ENCODE measurements at regions of chr6 and their contacts with region 1.

Region 1: GRCh38 chr6:85449818-85450759 is at the start of gene NT5E:
- DNase-seq: peak; percentile 57
- H3K4me3 Mint-ChIP-seq: peak within 1 kb of the TSS; percentile 73
- H3K27ac Mint-ChIP-seq: peak within 1 kb of the TSS; percentile 53
- H3K4me1 Mint-ChIP-seq: peaks cover 46% of the 10 kb centered on the region
- H3K27me3 Mint-ChIP-seq: peaks cover 79% of the 10 kb centered on the region

Region 2: GRCh38 chr6:85460921-85461797 is 11.1 kb after region 1 on chr6:
- CTCF ChIA-PET with region 1: interaction called, 12 read pairs
- DNase-seq: peak; percentile 65
- H3K4me3 Mint-ChIP-seq: no peak overlapping the region
- H3K27ac Mint-ChIP-seq: peak overlapping the region; percentile 89
- H3K4me1 Mint-ChIP-seq: peaks cover 69% of the 10 kb centered on the region
- H3K27me3 Mint-ChIP-seq: peaks cover 15% of the 10 kb centered on the region

Region 3: GRCh38 chr6:85580882-85581267 is 130.8 kb after region 1 on chr6:
- CTCF ChIA-PET with region 1: no interaction called
- DNase-seq: no peak
- H3K4me3 Mint-ChIP-seq: no peak overlapping the region
- H3K27ac Mint-ChIP-seq: no peak overlapping the region
- H3K4me1 Mint-ChIP-seq: no peaks in the 10 kb centered on the region
- H3K27me3 Mint-ChIP-seq: no peaks in the 10 kb centered on the region

Region 4: GRCh38 chr6:85620308-85620707 is 170.2 kb after region 1 on chr6:
- CTCF ChIA-PET with region 1: no interaction called
- DNase-seq: no peak
- H3K4me3 Mint-ChIP-seq: no peak overlapping the region
- H3K27ac Mint-ChIP-seq: no peak overlapping the region
- H3K4me1 Mint-ChIP-seq: peaks cover 19% of the 10 kb centered on the region
- H3K27me3 Mint-ChIP-seq: no peaks in the 10 kb centered on the region

Region 5: GRCh38 chr6:85637579-85637978 is 187.5 kb after region 1 on chr6:
- CTCF ChIA-PET with region 1: no interaction called
- DNase-seq: no peak
- H3K4me3 Mint-ChIP-seq: no peak overlapping the region
- H3K27ac Mint-ChIP-seq: peak overlapping the region; percentile 12
- H3K4me1 Mint-ChIP-seq: peaks cover 54% of the 10 kb centered on the region
- H3K27me3 Mint-ChIP-seq: peaks cover 4% of the 10 kb centered on the region